Activated T-helper 1 cell treated with anti-CD3 and anti-CD28 coated beads, Interleukin-12 subunit alpha, Interleukin-12 subunit beta, Interleukin-2, Interleukin-4 antibody, amounts not matched to agents 30 ng/mL and 10 ng/mL and 1 ng/mL, durations not matched to agents 14 hours and 24 hours and 36 hours (primary cell): ENCODE measurements at regions of chr6 and their contacts with region 1.

Region 1: GRCh38 chr6:15776458-15776980 is 113.7 kb upstream of the DTNBP1 start:
- DNase-seq: peak; percentile 21
- H3K4me3 Mint-ChIP-seq: no peak overlapping the region
- H3K27ac Mint-ChIP-seq: peak overlapping the region; percentile 78
- H3K4me1 Mint-ChIP-seq: peaks cover 46% of the 10 kb centered on the region
- H3K27me3 Mint-ChIP-seq: no peaks in the 10 kb centered on the region

Region 2: GRCh38 chr6:15691250-15691869 is 85.2 kb before region 1 on chr6:
- intact Hi-C with region 1: loop called (anchors 2 kb)
- DNase-seq: peak; percentile 76
- H3K4me3 Mint-ChIP-seq: no peak overlapping the region
- H3K27ac Mint-ChIP-seq: no peak overlapping the region
- H3K4me1 Mint-ChIP-seq: peaks cover 16% of the 10 kb centered on the region
- H3K27me3 Mint-ChIP-seq: peaks cover 7% of the 10 kb centered on the region

Region 3: DNA sequence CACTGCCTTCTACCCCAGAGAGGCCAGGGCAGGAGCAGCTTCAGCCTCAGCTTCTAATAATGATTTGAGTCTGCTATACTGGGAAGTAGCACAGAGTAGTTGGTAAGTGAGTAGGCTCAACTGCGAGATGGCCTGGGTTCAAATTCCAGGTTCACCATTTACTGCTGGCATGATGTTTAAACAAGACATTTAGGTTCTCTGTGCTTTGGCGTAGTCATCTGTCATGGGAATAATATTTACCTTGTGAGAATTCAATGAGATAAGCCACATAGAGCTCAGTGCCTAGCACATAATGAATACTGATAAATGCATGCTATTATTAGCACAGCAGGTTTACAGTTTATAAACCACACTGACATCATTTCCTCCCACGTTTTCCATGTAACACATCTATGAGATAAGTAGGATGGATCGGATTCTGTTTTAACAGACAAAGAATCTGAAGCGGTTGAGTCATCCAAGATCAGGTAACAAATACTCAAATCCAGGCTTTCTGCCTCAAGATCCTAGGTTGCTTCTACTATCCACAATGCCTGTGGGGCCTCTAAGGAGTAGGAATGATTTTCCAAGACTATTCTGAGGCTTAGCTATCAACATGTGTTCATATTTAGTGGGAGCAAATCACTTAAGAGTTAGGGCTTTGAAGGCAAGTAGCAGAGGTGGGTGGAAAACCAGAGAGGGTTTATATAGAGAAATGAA is 40.8 kb before region 1 on chr6:
- intact Hi-C with region 1: loop called (anchors 1 kb)
- DNase-seq: no peak
- H3K4me3 Mint-ChIP-seq: peak overlapping the region; percentile 6
- H3K27ac Mint-ChIP-seq: peak overlapping the region; percentile 78
- H3K4me1 Mint-ChIP-seq: peaks cover 38% of the 10 kb centered on the region
- H3K27me3 Mint-ChIP-seq: peaks cover 2% of the 10 kb centered on the region

Region 4: DNA sequence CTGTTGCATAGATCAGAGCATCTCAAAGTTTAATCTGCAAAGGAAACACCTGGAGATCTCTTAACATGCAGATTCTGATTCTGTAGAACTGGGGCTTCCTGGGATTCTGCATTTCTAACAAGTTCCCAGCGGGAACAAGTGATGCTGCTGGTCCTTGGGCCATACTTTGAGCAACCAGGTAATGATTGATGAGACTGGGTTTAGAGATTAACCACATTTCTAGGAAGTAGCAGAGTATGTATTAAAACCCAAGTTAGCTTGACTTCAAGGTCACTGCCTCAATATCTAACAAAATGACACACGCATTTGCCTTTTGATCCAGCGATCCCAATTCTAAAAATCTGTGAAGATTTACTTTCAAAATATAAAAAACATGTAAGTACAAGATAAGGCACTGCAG is 30.7 kb before region 1 on chr6:
- intact Hi-C with region 1: no loop called
- DNase-seq: no peak
- H3K4me3 Mint-ChIP-seq: no peak overlapping the region
- H3K27ac Mint-ChIP-seq: no peak overlapping the region
- H3K4me1 Mint-ChIP-seq: no peaks in the 10 kb centered on the region
- H3K27me3 Mint-ChIP-seq: no peaks in the 10 kb centered on the region

Region 5: DNA sequence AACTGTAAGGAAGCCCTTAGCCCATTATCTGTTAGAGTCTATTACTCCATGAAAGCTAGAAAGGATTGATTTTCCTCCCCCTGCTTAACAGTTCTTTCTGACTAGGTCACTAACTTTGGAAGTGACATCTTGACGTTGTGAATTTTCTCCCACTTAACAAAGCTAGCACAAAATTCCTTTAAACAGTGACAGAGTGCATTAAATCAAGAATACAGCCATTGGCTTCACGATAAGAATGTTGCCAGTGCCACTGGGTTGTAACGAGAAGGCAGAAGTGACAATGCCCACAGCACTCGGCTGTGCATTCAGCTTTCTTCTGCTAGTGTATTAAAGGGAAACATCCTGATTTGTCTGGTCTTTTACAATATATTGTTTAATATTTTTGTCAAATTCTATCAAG is 69.0 kb after region 1 on chr6:
- intact Hi-C with region 1: no loop called
- DNase-seq: no peak
- H3K4me3 Mint-ChIP-seq: no peak overlapping the region
- H3K27ac Mint-ChIP-seq: no peak overlapping the region
- H3K4me1 Mint-ChIP-seq: no peaks in the 10 kb centered on the region
- H3K27me3 Mint-ChIP-seq: peaks cover 2% of the 10 kb centered on the region

Region 6: DNA sequence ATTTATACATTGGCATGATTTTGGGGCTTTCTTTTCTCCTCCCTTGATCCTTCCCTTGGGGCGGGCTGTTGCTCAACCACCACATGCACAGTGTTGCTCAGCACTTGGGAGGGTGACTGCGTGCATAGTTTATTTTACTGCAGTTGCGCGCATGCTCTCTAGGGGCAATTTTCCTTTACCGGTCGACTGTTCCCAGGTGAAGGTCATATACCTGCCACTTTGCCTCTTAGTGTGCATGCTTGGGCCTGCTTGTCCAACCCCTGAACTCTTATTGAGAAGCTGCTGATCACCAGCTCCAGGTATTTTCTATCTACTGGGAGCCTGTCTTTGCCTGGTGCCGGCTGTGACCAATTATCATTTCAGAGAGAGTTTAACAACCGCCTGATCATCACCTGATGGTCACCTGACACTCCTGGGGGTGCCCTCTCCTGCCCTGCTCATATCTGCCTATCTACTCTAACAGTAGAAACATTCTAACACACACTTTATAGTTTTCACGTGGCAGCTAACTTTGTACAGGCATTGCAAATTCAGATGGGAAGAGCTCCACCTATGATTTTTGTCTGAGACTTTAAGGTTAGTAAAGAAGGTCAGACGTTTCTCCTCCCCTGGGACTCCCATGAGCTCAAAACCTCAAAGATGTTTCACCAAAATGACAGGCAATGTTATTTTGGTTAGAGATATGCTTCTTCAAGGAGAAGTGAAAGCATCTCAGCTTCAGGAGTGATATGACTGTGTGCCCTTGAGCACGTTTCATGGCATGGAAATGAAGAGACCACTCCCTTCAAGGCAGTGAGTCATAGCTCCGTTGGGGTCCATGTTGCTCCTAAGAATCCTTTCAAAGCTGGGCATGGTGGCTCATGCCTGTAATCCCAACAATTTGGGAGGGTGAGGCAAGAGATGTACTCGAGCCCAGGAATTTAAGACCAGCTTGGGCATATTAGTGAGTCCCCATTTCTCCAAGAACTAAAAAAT is 124.9 kb after region 1 on chr6:
- intact Hi-C with region 1: loop called (anchors 1 kb)
- DNase-seq: peak; percentile 44
- H3K4me3 Mint-ChIP-seq: peak overlapping the region; percentile 50
- H3K27ac Mint-ChIP-seq: peak overlapping the region; percentile 87
- H3K4me1 Mint-ChIP-seq: peaks cover 42% of the 10 kb centered on the region
- H3K27me3 Mint-ChIP-seq: no peaks in the 10 kb centered on the region

Region 7: DNA sequence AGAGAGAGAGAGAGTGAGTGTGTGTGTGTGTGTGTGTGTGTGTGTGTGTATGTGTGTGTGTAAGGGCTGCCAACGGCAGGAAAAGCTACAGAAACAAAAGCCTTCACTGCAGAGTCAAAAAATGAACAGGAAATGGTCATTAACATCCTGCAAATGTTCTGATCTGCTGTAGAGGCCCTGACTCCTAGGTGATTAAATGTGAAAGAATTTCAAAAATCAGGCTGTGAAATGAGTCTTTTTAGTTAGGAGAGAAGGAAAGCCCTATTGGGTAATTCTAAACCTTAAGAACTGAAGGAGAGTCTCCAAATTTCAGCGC is 185.9 kb after region 1 on chr6:
- intact Hi-C with region 1: loop called (anchors 1 kb)
- DNase-seq: peak; percentile 16
- H3K4me3 Mint-ChIP-seq: no peak overlapping the region
- H3K27ac Mint-ChIP-seq: peak overlapping the region; percentile 87
- H3K4me1 Mint-ChIP-seq: peaks cover 33% of the 10 kb centered on the region
- H3K27me3 Mint-ChIP-seq: no peaks in the 10 kb centered on the region

Region 8: DNA sequence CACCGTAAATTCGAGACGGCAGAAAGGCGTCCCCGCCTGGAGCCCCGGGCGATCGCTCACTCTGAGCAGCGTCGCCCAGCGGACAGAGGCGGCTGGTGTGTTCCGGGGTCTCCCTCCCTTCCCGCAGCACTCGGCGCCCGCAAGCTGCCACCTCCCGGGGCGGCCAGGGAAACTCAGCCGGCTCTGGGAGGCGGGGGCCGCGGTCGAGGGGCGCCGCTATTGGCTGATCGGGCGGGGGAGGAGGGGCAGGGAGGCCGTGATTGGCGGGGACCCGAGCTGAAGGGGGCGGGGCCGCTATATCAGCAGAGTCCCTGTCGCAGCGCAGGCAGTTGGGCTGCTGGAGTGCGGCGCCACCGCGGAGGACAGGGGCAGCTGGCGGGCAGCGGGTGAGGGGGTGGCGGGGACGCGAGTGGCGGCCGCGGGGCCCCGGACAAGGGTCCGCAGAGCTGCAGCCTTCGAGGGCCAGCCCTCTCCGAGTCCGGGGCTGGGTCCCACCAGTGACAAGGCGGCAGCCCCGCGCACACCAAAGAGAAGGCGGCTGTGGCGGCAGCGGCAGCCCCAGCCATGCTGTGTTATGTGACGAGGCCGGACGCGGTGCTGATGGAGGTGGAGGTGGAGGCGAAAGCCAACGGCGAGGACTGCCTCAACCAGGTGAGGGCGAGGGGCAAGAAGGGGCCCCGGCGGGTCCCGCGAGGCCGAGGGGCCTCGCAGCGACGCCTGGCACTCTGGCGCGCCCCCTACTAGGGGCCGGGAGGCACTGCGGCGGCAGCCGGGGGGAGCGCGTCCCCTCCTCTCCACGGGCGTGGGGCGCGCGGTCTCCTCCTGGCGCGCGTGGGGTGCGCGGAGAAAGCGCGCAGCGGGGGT is 352.5 kb after region 1 on chr6 and contains the start of gene MYLIP:
- intact Hi-C with region 1: loop called (anchors 1 kb)
- DNase-seq: peak; percentile 94
- H3K4me3 Mint-ChIP-seq: peak within 1 kb of the TSS; percentile 91
- H3K27ac Mint-ChIP-seq: peak within 1 kb of the TSS; percentile 91
- H3K4me1 Mint-ChIP-seq: peaks cover 35% of the 10 kb centered on the region
- H3K27me3 Mint-ChIP-seq: peaks cover 21% of the 10 kb centered on the region
- total RNA-seq, gene MYLIP: 20.7 and 21.9 TPM in 2 replicates

Region 9: DNA sequence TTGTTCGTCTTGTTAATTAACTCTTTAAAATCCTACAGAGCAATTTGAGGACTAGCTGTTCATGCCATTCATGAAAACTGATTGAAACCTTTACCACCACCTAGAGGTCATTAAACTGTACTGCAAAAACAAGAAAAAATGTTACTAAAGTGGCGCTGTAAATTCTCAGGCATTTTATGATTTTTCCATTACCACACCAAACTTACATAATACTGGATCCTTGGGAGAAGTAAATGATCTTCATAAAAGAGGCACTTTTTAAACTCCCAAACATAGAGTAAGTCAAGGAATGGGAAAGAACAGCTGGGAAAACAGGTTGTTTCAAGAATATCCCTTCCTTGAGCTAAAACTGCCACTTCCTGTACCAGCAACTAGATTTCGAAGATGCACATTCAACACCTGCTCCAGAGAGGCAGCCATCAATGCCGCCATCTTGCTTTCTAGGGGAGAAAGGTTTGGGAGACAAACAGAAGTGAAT is 406.7 kb after region 1 on chr6:
- intact Hi-C with region 1: loop called (anchors 5 kb)
- DNase-seq: no peak
- H3K4me3 Mint-ChIP-seq: peak overlapping the region; percentile 5
- H3K27ac Mint-ChIP-seq: no peak overlapping the region
- H3K4me1 Mint-ChIP-seq: peaks cover 44% of the 10 kb centered on the region
- H3K27me3 Mint-ChIP-seq: peaks cover 13% of the 10 kb centered on the region